Mammary epithelial cell (primary cell): ENCODE measurements at regions of chr1 and their contacts with region 1.

Region 1: GRCh38 chr1:34816778-34817177 is 24.0 kb downstream of the GJA4 start:
- DNase-seq: no peak
- H3K4me3 ChIP-seq: no peak overlapping the region
- H3K27ac ChIP-seq: no peak overlapping the region
- H3K4me1 ChIP-seq: no peaks in the 10 kb centered on the region
- H3K27me3 ChIP-seq: peaks cover 4% of the 10 kb centered on the region
- CTCF ChIP-seq: no peak

Region 2: DNA sequence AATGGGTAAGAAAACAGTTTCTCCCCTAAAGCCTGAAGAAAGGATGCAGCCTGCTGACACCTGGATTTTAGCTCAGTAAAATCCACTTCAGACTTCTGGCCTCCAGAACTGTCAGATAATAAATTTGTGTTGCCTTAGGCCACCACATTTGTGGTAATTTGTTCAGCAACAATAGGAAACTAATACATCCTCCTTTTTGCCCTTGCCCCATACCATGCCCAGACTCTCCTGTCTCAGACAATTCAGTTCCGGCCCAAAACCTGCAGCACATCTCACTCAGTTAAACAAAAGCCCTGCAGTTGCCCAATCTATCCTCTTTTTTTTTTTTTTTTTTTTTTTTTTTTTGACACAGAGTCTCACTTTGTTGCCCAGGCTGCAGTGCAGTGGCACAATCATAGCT is 16.9 kb after region 1 on chr1:
- CTCF ChIA-PET with region 1: interaction called, 12 read pairs
- dilution Hi-C with region 1: no loop called
- in situ Hi-C with region 1: no loop called
- intact Hi-C with region 1: no loop called
- DNase-seq: no peak
- H3K4me3 ChIP-seq: no peak overlapping the region
- H3K27ac ChIP-seq: no peak overlapping the region
- H3K4me1 ChIP-seq: no peaks in the 10 kb centered on the region
- H3K27me3 ChIP-seq: no peaks in the 10 kb centered on the region
- CTCF ChIP-seq: no peak